SK-N-SH (cell line): ENCODE measurements at regions of chr11 and their contacts with region 1.

Region 1: GRCh38 chr11:66022401-66023185 is 3.7 kb downstream of the CATSPER1 start:
- DNase-seq: peak; percentile 95
- H3K4me3 ChIP-seq: peak overlapping the region; percentile 17 to 29; a peak in 2 of 4 replicates
- H3K27ac ChIP-seq: no peak overlapping the region
- H3K4me1 ChIP-seq: peaks cover 3 to 21% of the 10 kb centered on the region in 2 experiments; a peak in 3 of 4 replicates
- H3K27me3 ChIP-seq: no peaks in the 10 kb centered on the region
- CTCF ChIP-seq: peak; percentile 90
- EP300 ChIP-seq: no peak
- RAD21 ChIP-seq: peak; percentile 67

Region 2: DNA sequence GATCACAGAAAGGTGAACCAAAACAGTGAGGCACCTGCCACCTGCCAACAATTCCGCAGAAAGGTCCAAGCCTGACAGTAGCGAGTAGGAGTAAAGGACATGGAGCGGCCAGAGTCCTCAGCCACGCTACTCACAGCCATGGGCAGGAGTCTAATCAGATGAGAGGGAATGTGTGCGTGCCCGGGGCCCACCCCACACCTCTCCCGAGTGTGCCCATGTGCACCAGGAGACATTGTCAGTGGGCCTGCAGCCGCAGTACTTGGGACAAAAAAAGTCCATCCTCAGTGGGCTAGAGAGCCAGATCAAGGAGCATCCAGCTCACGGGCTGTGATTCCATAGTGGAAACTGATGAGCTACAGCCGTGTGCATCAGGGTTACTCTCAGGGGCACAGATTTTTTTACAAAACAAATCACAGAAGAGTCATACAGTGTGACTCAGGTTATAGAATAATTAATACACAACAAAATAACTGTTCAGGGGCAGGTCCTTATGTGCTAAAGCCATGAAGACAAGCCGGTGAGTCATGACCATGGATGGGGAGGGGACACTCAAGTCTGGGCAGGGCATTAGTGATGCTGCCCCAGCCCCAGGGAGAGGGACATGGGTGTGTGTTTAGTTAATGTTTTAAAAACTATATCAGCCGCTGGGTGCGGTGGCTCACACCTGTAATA is 49.0 kb before region 1 on chr11:
- CTCF ChIA-PET with region 1: no interaction called
- POLR2A ChIA-PET with region 1: no interaction called
- DNase-seq: no peak
- H3K4me3 ChIP-seq: no peak overlapping the region
- H3K27ac ChIP-seq: no peak overlapping the region
- H3K4me1 ChIP-seq: no peaks in the 10 kb centered on the region
- H3K27me3 ChIP-seq: no peaks in the 10 kb centered on the region
- CTCF ChIP-seq: no peak
- EP300 ChIP-seq: no peak
- RAD21 ChIP-seq: no peak

Region 3: GRCh38 chr11:66001942-66002647 is 20.5 kb before region 1 on chr11 and contains the starts of genes BANF1 and EIF1AD:
- CTCF ChIA-PET with region 1: interaction called, 14 read pairs
- POLR2A ChIA-PET with region 1: no interaction called
- DNase-seq: peak; percentile 90
- H3K4me3 ChIP-seq: peak within 1 kb of the TSS; percentile 95 to 99
- H3K27ac ChIP-seq: peak within 1 kb of the TSS; percentile 98
- H3K4me1 ChIP-seq: peaks cover 6 to 11% of the 10 kb centered on the region in 2 experiments; a peak in 3 of 4 replicates
- H3K27me3 ChIP-seq: no peaks in the 10 kb centered on the region
- CTCF ChIP-seq: no peak
- EP300 ChIP-seq: peak; percentile 2 to 42; a peak in 1 of 4 replicates
- RAD21 ChIP-seq: no peak
- polyA plus RNA-seq, gene BANF1: 311 and 382 TPM in 2 replicates
- polyA plus RNA-seq, gene EIF1AD: 28.9 and 31.4 TPM in 2 replicates

Region 4: DNA sequence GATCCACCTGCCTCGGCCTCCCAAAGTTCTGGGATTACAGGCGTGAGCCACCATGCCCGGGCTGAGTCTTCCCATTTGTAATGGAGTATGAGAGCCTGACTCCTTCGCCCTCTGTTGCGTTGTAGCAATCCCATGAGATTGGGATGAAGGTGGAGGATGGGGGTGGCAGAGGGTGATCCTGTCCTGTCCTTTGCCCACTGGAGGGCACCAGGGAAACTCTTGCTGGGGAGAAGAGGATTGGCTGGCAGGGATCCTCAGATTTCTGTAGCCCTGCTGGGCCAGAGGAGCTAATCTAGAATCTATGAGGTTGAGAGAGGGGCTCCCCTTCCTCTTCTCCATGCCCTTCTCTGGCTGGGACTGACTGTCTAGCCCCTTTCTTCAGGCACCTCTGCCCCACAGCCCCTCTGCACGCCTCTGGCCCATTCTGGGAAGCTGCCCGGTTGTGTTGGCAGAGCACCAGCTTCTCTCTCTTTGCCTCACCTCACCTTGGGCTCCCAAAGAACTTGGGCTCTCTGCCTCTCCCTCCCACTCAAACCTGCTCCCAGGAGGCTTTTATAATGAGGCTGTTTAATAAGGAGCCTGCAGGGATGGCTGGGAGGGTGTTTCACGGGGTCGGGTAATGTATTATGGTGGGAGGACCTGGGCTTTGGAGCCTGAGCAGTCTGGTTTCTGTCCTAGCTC is 13.2 kb after region 1 on chr11:
- CTCF ChIA-PET with region 1: interaction called, 55 read pairs
- POLR2A ChIA-PET with region 1: no interaction called
- DNase-seq: no peak
- H3K4me3 ChIP-seq: no peak overlapping the region
- H3K27ac ChIP-seq: no peak overlapping the region
- H3K4me1 ChIP-seq: no peaks in the 10 kb centered on the region
- H3K27me3 ChIP-seq: no peaks in the 10 kb centered on the region
- CTCF ChIP-seq: no peak
- EP300 ChIP-seq: no peak
- RAD21 ChIP-seq: no peak

Region 5: GRCh38 chr11:66051766-66052663 is 29.4 kb after region 1 on chr11 and contains the start of gene SF3B2:
- CTCF ChIA-PET with region 1: interaction called, 46 read pairs
- POLR2A ChIA-PET with region 1: no interaction called
- DNase-seq: peak; percentile 96
- H3K4me3 ChIP-seq: peak within 1 kb of the TSS; percentile 90 to 99
- H3K27ac ChIP-seq: peak within 1 kb of the TSS; percentile 81 to 94
- H3K4me1 ChIP-seq: peaks cover 15 to 40% of the 10 kb centered on the region in 2 experiments; a peak in 2 of 4 replicates
- H3K27me3 ChIP-seq: no peaks in the 10 kb centered on the region
- CTCF ChIP-seq: no peak
- EP300 ChIP-seq: no peak; a peak in 1 of 4 replicates
- RAD21 ChIP-seq: no peak
- polyA plus RNA-seq, gene SF3B2: 90.9 and 128 TPM in 2 replicates

Region 6: DNA sequence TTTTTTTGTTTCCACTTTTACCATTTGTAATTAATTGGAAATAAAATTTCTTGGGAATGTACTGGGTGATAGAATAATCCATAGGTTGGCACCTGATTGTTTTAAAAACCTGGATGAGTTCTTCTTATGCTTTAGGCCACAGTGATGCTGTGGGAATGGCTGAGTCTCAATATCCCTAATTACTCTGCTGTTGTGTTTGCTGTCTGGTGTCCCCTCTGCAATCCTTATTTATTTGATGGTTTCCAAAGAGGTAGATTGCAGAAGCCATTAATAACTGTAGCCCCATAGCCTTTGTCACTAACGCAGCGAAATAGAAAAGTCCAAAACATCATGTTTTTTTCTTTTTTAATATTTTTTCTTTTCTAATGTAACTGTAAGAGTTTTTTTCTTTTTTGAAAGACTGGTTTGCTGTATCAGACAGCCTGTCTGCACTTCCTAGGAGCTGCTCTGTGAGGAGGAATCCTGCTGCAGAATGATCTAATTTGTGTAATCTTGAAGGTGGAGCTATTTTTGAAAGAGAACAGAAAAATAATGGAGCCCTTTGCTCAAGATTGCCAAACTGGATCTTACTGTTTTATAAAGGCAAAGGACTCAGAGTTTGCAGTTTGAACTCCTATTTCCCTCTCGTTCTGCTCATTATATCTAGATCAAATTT is 62.4 kb after region 1 on chr11:
- CTCF ChIA-PET with region 1: no interaction called
- POLR2A ChIA-PET with region 1: no interaction called
- DNase-seq: no peak
- H3K4me3 ChIP-seq: no peak overlapping the region
- H3K27ac ChIP-seq: peak overlapping the region; percentile 80 to 94; a peak in 3 of 4 replicates
- H3K4me1 ChIP-seq: peaks cover 43 to 50% of the 10 kb centered on the region in 2 experiments
- H3K27me3 ChIP-seq: no peaks in the 10 kb centered on the region
- CTCF ChIP-seq: no peak
- EP300 ChIP-seq: no peak
- RAD21 ChIP-seq: no peak